ENCODE measurements at regions of chr1 and their contacts with region 1.

Region 1: GRCh38 chr1:100921109-100921706 is 25.3 kb downstream of the SLC30A7 start:
- DNase-seq: no peak
- H3K4me3 Mint-ChIP-seq: no peak overlapping the region
- H3K27ac Mint-ChIP-seq: no peak overlapping the region
- H3K4me1 Mint-ChIP-seq: peaks cover 32% of the 10 kb centered on the region
- H3K27me3 Mint-ChIP-seq: no peaks in the 10 kb centered on the region

Region 2: DNA sequence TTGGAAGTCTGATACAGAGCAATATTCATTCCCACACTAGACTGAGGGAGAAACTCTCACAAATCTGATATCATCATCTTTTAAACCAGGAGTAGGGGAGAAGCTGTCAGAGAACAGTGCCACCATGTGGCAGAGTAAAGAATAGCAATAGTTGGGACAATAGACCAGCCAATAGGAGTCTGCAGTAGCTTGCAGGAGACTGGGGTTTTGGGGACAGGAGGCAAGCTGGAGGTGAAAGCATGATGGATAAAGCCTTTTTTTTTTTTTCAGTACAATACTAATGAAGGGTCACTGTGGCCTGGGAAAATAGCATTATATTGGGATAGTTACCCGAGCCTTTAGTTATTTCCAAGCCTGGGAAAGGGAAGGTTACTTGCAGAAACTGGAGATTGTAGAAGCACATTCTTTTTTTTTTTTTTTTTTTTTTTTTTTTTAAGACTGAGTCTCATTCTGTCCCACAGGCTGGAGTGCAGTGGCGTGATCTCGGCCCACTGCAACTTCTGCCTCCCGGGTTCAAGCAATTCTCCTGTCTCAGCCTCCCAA is 436.3 kb after region 1 on chr1:
- intact Hi-C with region 1: loop called (anchors 1 kb)
- DNase-seq: peak; percentile 66
- H3K4me3 Mint-ChIP-seq: no peak overlapping the region
- H3K27ac Mint-ChIP-seq: no peak overlapping the region
- H3K4me1 Mint-ChIP-seq: peaks cover 13% of the 10 kb centered on the region
- H3K27me3 Mint-ChIP-seq: peaks cover 52% of the 10 kb centered on the region

Region 3: GRCh38 chr1:101444873-101445618 is 523.8 kb after region 1 on chr1:
- intact Hi-C with region 1: loop called (anchors 10 kb)
- DNase-seq: no peak
- H3K4me3 Mint-ChIP-seq: no peak overlapping the region
- H3K27ac Mint-ChIP-seq: no peak overlapping the region
- H3K4me1 Mint-ChIP-seq: no peaks in the 10 kb centered on the region
- H3K27me3 Mint-ChIP-seq: peaks cover 54% of the 10 kb centered on the region

Measured in activated T-helper 2 cell treated with anti-CD3 and anti-CD28 coated beads, Interferon-gamma antibody, Interleukin-2, Interleukin-4, amounts not matched to agents 10 μg/mL and 5 μg/mL and 100 μg/mL, durations not matched to agents 14 hours and 24 hours and 36 hours (primary cell).